ENCODE measurements at regions of chr3 and their contacts with region 1.

Region 1: DNA sequence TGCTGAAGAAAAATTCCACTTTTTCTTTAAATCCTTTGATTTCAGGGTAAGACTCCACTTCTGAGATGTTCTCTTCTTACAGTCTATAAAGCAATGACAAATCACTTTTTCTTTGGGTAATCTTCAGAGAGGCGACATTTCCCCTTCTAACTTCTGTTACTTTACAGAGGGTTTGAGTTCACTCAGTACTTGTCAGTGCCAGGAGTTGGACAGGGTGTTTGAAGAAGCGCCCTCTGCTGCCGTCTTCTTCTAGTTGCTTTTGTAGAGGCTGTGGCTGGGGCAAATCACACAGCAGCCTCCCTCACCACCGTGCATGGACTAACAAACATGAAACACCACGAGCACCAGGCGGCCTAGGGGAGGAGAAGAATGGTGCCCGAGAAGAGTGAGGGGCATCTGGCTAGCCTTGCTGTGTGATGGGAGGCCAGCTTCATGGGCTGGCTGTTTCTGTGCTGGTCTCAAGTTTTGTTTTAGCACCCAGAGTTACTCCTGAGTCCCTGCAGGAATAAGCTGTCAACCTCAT is at the start of gene CD80:
- DNase-seq: peak; percentile 27 to 72
- ATAC-seq: peak; percentile 60 to 81 (median 74)
- H3K4me3 ChIP-seq: peak within 1 kb of the TSS; percentile 19
- H3K4me3 Mint-ChIP-seq: no peak within 1 kb of the TSS
- H3K27ac ChIP-seq: peak within 1 kb of the TSS; percentile 31
- H3K27ac Mint-ChIP-seq: peak within 1 kb of the TSS in 1 of 2 donors; percentile 62
- H3K4me1 ChIP-seq: peaks cover 19% of the 10 kb centered on the region
- H3K4me1 Mint-ChIP-seq: peaks cover 5 to 6% of the 10 kb centered on the region in 2 donors
- H3K27me3 ChIP-seq: no peaks in the 10 kb centered on the region
- H3K27me3 Mint-ChIP-seq: peaks cover 0 to 6% of the 10 kb centered on the region in 2 donors
- CTCF ChIP-seq: peak; percentile 26
- total RNA-seq, gene CD80: 0.40 to 1.1 TPM in 2 of 3 donors, not detected in the other

Region 2: DNA sequence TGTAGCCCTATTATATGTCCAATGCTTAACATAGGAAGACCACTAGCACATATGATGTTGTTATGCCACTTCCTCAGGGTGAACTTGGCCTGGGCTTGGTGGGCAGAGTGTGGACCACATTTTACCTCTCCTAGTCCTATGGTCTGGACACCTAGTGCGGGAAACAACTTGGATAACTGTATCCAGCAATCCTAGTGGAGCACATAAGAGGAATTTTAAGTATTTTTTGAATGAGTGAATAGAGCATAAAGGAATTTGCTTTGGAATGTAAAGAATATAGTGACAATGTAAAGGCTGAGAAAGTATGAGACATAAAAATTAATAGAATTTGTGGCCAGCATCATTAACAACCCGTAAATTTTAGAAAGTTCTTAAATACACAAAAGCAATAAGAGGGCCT is 1053.7 kb before region 1 on chr3:
- intact Hi-C with region 1: no loop called
- DNase-seq: no peak
- ATAC-seq: no peak
- H3K4me3 ChIP-seq: no peak overlapping the region
- H3K4me3 Mint-ChIP-seq: no peak overlapping the region
- H3K27ac ChIP-seq: no peak overlapping the region
- H3K27ac Mint-ChIP-seq: no peak overlapping the region
- H3K4me1 ChIP-seq: no peaks in the 10 kb centered on the region
- H3K4me1 Mint-ChIP-seq: no peaks in the 10 kb centered on the region
- H3K27me3 ChIP-seq: no peaks in the 10 kb centered on the region
- H3K27me3 Mint-ChIP-seq: no peaks in the 10 kb centered on the region
- CTCF ChIP-seq: no peak

Region 3: GRCh38 chr3:119279101-119279554 is 280.4 kb before region 1 on chr3:
- intact Hi-C with region 1: loop called (anchors 1 kb)
- DNase-seq: no peak
- ATAC-seq: no peak
- H3K4me3 ChIP-seq: no peak overlapping the region
- H3K4me3 Mint-ChIP-seq: no peak overlapping the region
- H3K27ac ChIP-seq: no peak overlapping the region
- H3K27ac Mint-ChIP-seq: no peak overlapping the region
- H3K4me1 ChIP-seq: no peaks in the 10 kb centered on the region
- H3K4me1 Mint-ChIP-seq: peaks cover 0 to 5% of the 10 kb centered on the region in 2 donors
- H3K27me3 ChIP-seq: no peaks in the 10 kb centered on the region
- H3K27me3 Mint-ChIP-seq: no peaks in the 10 kb centered on the region
- CTCF ChIP-seq: no peak

Region 4: DNA sequence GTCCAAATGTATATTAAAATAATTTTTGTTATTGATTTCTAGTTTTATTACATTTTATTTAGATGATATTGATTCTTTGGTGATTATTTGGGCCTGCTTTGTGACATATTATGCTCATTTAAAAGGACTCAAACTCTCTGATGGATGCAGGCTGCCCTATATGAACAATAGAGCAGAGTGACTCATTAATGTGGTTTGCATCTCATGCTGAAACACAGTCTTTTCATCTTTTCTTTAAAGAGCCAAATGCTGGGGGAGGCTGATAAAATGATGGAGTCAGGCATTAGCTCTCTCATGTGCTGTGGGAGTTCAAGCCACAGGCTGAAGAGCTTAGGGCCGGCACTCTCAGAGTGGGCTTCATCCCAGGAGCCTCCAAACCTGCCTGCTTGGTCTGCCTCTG is 45.4 kb after region 1 on chr3:
- intact Hi-C with region 1: no loop called
- DNase-seq: no peak
- ATAC-seq: no peak
- H3K4me3 ChIP-seq: no peak overlapping the region
- H3K4me3 Mint-ChIP-seq: no peak overlapping the region
- H3K27ac ChIP-seq: no peak overlapping the region
- H3K27ac Mint-ChIP-seq: no peak overlapping the region
- H3K4me1 ChIP-seq: peaks cover 5% of the 10 kb centered on the region
- H3K4me1 Mint-ChIP-seq: no peaks in the 10 kb centered on the region
- H3K27me3 ChIP-seq: no peaks in the 10 kb centered on the region
- H3K27me3 Mint-ChIP-seq: peaks cover 5 to 15% of the 10 kb centered on the region in 2 donors
- CTCF ChIP-seq: no peak

Region 5: DNA sequence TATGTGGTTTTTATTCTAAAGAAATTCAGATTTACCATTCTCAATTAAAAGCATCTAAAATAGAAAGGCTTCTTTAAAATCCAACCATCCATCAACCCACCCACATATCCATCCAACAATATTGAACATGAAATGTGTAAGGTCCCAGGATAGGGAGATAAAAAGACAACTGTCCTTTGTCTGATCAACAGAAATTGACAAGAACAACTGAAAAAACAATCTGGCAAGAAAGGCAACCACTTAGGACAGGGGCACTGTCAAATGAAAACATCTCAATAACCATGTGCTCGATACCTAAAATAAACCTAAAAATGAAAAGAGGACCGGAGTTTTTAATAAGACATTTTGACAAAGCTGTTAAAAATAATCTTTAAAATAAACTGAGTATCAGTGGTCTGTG is 289.6 kb after region 1 on chr3:
- intact Hi-C with region 1: no loop called
- DNase-seq: no peak
- ATAC-seq: no peak
- H3K4me3 ChIP-seq: no peak overlapping the region
- H3K4me3 Mint-ChIP-seq: no peak overlapping the region
- H3K27ac ChIP-seq: no peak overlapping the region
- H3K27ac Mint-ChIP-seq: no peak overlapping the region
- H3K4me1 ChIP-seq: no peaks in the 10 kb centered on the region
- H3K4me1 Mint-ChIP-seq: peaks cover 38 to 43% of the 10 kb centered on the region in 2 donors
- H3K27me3 ChIP-seq: no peaks in the 10 kb centered on the region
- H3K27me3 Mint-ChIP-seq: no peaks in the 10 kb centered on the region
- CTCF ChIP-seq: no peak